ENCODE measurements at regions of chr11 and their contacts with region 1.

Region 1: GRCh38 chr11:116691771-116692177 is 81.0 kb downstream of the BUD13 start:
- DNase-seq: peak; percentile 65
- ATAC-seq: peak; percentile 88
- H3K4me3 Mint-ChIP-seq: no peak overlapping the region
- H3K27ac Mint-ChIP-seq: no peak overlapping the region
- H3K4me1 Mint-ChIP-seq: no peaks in the 10 kb centered on the region
- H3K27me3 Mint-ChIP-seq: no peaks in the 10 kb centered on the region

Region 2: GRCh38 chr11:116454020-116454645 is 237.6 kb before region 1 on chr11:
- CTCF ChIA-PET with region 1: interaction called, 12 read pairs
- DNase-seq: peak; percentile 47
- ATAC-seq: no peak
- H3K4me3 Mint-ChIP-seq: no peak overlapping the region
- H3K27ac Mint-ChIP-seq: no peak overlapping the region
- H3K4me1 Mint-ChIP-seq: no peaks in the 10 kb centered on the region
- H3K27me3 Mint-ChIP-seq: peaks cover 2% of the 10 kb centered on the region

Region 3: GRCh38 chr11:116901211-116901610 is 209.4 kb after region 1 on chr11:
- CTCF ChIA-PET with region 1: no interaction called
- DNase-seq: no peak
- ATAC-seq: no peak
- H3K4me3 Mint-ChIP-seq: no peak overlapping the region
- H3K27ac Mint-ChIP-seq: no peak overlapping the region
- H3K4me1 Mint-ChIP-seq: no peaks in the 10 kb centered on the region
- H3K27me3 Mint-ChIP-seq: no peaks in the 10 kb centered on the region